WTC11 (cell line): ENCODE measurements at regions of chr17 and their contacts with region 1.

Region 1: DNA sequence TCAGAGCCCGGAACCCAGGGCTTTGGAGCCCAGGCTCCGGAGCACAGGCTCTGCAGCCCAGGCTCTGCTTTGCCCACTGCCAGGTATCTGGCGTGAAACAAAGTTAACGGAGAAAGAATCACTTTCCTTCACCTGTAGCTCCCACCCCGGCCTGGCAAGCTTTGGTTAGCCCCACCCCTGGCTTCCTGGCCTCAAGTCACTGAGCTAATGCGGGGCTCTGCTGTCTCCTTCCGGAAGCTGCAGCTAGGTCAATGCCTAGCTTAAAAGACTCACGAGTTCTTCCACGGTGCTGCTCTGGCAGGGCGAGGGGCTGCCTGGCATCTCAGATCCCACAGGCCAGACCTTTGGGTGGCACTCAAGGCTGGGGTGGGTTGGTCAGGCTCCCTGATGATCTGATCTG is 21.1 kb upstream of the SPPL2C start:
- DNase-seq: no peak
- ATAC-seq: no peak
- H3K4me3 Mint-ChIP-seq: no peak overlapping the region
- H3K27ac Mint-ChIP-seq: no peak overlapping the region
- H3K4me1 Mint-ChIP-seq: no peaks in the 10 kb centered on the region
- H3K27me3 Mint-ChIP-seq: no peaks in the 10 kb centered on the region
- CTCF ChIP-seq: no peak

Region 2: DNA sequence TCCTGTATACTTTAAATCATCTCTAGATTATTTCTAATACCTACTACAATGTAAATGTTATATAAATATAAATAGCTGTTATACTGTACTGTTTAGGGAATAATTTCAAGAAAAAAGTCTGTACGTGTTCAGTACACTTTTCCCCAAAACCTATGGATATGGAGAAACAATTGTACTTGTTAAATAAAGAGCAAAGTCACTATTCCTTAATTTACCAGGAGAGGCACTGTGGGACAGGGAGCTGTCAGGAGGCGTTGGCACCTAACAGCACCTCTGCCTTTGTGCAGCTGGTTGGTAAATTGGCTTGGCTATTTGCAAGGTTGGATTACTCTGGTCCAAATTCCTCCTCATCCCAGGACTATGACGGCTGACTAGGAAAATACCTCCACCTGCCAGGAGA is 11.5 kb before region 1 on chr17:
- CTCF ChIA-PET with region 1: interaction called, 16 read pairs
- POLR2A ChIA-PET with region 1: no interaction called
- DNase-seq: no peak
- ATAC-seq: peak; percentile 30
- H3K4me3 Mint-ChIP-seq: no peak overlapping the region
- H3K27ac Mint-ChIP-seq: no peak overlapping the region
- H3K4me1 Mint-ChIP-seq: peaks cover 14% of the 10 kb centered on the region
- H3K27me3 Mint-ChIP-seq: no peaks in the 10 kb centered on the region; the same call in 1 of the 2 replicates
- CTCF ChIP-seq: no peak